AG04449 (cell line): ENCODE measurements at regions of chr22 and their contacts with region 1.

Region 1: DNA sequence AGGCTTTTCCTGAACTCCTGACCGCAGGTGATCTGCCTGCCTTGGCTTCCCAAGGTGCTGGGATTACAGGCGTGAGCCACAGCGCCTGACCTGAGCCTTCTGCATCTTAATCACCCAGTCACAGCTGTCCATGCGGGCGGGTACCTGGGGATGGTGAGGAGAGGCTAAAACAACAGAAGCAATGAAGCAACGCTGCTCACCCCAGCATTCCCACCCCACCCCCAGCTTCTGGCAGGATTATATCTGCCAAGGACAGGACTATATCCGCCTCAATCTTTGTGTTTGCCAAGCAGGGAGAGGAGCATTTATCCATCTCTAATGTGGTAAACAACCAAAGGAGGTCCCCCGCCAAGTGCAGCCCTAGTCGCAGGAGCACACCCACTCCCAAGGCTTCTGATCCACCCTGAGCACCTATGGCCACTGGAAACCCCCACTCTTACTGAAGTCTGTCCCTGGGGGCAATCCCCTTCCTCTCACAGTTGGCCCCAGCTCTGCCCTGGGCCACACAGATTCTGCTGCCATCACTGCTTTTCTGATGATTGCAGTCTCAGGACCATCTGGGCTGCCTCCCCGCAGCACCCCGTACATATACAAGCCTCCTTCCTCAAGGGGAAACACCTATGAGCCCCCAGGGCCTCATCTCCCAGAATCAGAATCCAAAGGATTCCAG is 8.8 kb upstream of the LGALS2 start:
- DNase-seq: no peak
- H3K4me3 ChIP-seq: no peak overlapping the region
- CTCF ChIP-seq: no peak

Region 2: GRCh38 chr22:37362621-37363020 is 226.1 kb before region 1 on chr22:
- CTCF ChIA-PET with region 1: no interaction called
- POLR2A ChIA-PET with region 1: no interaction called
- DNase-seq: no peak
- H3K4me3 ChIP-seq: no peak overlapping the region
- CTCF ChIP-seq: no peak

Region 3: DNA sequence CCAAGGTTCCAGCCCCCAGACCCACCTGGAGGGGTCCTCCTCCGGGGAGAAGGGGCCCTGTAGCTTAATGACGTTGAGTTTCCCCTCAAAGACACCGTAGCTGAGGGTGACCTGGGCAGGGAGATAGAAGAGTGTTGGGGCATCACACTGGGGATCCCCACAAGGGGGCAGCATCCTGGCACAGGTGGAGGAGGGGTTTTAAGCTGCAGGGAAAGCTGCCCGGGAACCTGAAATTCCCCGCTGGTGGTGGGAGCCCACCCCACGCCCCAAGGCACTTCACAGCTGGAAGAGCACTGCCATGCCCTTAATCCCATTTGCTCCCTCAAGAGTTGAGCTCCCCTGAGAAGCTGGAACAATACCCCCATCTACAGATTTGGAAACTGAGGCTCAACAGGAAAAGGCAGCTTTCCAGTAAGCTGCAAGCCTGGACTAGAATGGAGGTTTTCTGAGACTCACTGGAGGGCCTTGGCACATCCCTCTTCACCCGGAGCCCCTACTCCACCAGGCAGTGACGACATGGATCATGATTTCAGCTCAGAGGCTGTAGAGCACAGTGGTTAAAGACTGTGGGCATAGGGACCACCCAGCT is 116.2 kb before region 1 on chr22:
- CTCF ChIA-PET with region 1: interaction called, 19 read pairs
- POLR2A ChIA-PET with region 1: no interaction called
- DNase-seq: no peak
- H3K4me3 ChIP-seq: no peak overlapping the region
- CTCF ChIP-seq: peak; percentile 61

Region 4: GRCh38 chr22:37486224-37486845 is 102.3 kb before region 1 on chr22 and contains the start of gene MFNG:
- CTCF ChIA-PET with region 1: no interaction called
- POLR2A ChIA-PET with region 1: no interaction called
- DNase-seq: no peak
- H3K4me3 ChIP-seq: no peak within 1 kb of the TSS
- CTCF ChIP-seq: no peak

Region 5: DNA sequence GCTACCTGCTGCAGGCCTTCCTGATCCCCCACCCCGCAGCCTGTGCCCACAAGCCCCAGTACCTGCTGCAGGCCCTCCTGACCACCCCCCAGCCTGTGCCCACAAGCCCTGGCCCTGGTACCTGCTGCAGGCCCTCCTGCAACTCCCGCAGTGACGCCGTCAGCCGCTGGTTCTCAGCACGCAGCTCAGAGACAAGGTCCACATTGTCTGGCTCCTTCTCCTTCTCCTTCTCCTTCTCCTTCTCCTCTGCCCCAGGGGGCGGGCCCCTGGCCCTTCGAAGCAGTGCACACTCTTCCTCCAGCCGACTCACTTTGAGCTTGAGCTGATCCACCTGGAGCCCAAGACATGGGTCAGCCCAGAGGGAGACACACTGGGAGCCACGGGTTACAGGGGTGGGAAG is 78.6 kb before region 1 on chr22:
- CTCF ChIA-PET with region 1: interaction called, 11 read pairs
- POLR2A ChIA-PET with region 1: no interaction called
- DNase-seq: no peak
- H3K4me3 ChIP-seq: no peak overlapping the region
- CTCF ChIP-seq: no peak

Region 6: DNA sequence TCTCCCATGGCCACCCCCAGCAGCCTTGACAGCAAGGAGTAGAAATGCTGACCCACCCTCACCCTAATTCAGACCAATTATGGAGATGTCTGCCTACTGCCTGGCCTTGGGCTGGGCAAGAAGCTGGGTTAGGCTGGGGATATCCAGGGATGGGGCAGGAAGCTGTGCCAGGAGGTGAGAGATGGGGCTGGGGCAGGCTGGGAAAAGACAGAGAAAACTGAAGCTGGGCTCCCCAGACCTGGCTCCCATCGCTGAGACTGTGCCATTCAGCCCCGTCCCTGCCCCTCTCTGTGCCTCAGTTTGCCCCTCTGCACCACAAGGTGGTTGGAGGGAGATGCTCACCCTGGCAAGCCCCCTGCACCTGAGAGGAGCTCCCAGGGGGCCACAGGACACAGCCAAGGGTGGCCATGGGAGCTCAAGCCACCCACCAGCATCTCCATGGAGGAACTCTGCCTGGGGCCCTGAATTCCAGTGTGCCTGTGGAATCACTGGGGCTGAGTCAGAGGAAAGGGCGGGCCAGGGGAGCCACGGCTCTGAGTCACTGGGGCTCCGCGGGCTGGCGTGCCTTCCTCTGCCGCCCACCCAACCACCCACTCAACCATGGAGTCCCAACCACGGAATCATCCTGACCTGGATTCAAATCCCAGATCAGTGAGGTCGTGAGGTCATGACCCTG is 63.5 kb before region 1 on chr22:
- CTCF ChIA-PET with region 1: interaction called, 12 read pairs
- POLR2A ChIA-PET with region 1: no interaction called
- DNase-seq: peak; percentile 37
- H3K4me3 ChIP-seq: no peak overlapping the region; the same call in 1 of the 2 replicates
- CTCF ChIP-seq: no peak

Region 7: DNA sequence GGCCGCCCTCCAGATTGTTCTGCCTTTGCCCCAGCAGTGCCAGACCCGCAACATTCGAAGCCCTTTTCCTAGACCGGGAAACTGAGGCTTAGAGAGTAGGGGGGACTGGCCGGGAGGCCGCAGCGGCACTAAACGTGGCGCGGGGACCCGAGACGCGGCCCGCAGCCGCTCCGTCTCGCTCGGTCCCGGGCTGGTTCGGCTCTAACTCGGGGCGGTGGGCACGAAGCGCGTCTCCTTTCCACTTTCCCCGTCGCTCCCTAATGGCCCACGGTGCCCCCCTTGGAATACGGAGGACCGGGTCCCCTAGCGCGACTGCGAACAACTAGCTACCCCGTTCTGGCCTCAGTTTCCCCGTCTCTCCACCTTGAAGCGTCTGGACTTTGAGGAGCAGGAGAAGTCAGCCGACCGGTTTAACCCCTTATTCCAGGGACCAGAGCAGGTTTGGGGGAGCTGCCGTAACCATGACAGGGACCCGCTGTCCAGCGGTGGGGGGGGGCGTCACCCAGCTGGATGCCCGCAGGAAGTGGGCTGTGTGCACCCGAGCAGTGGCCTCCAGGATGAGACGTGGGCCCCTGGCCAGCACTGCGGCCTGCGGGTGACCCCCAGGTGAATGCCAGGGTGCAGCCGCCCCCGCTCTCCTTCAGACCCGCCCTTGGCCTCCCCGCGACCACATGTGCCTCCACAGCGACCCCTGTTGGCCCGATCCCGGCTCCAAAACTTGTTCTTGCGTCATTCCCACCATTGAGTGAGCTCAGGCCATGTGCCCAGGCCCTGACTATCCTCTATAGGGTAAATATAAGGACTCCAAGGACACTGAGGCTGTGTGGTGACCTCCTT is 27.3 kb before region 1 on chr22:
- CTCF ChIA-PET with region 1: interaction called, 171 read pairs
- POLR2A ChIA-PET with region 1: interaction called, 5 read pairs
- DNase-seq: no peak
- H3K4me3 ChIP-seq: peak overlapping the region; percentile 82
- CTCF ChIP-seq: peak; percentile 90

Region 8: DNA sequence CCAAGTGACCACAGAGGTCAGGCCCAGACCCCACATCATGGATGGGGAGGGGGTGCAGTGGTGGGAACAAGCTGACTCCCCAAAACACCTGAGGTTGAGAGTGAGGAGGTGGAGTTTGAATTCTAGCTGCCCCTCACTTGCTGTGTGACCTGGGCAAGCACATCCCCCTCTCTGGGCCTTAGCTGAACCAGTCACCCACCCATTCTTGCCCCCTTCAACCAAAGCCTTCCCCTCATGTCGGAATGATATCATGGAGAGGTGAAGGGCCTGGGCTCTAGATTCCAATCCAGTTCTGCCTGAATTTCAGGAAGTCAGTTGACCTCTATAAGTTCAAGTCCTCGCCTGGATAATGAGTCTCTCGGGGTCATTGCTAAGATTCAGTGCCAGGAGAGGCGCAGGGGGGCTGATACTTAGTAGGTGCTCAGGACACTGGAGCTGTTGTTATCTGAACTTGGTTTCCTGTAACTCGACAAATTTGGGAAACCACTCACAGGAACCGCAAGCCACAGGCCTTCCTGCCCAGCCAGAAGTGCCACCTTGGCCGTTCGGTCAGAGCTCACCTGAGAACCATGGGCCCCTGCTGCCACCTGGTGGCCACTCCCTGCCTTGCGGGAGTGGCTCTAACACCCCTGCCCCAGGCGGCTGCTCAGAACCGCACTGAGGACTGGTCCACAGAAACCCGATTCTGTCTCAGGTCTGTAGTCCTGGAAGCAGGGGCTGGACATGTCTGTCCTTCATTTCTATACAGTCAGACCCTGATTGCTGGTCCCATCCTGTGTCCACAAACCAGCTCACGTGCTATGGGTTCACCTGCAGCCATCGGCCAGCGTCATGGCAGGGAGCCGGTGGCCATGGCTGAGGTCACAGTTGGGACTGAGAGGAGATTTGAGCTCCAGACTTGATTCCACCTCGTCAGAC is 21.5 kb before region 1 on chr22:
- CTCF ChIA-PET with region 1: interaction called, 171 read pairs
- POLR2A ChIA-PET with region 1: interaction called, 5 read pairs
- DNase-seq: no peak
- H3K4me3 ChIP-seq: no peak overlapping the region
- CTCF ChIP-seq: peak; percentile 83

Region 9: GRCh38 chr22:37575490-37576003 is 13.1 kb before region 1 on chr22:
- CTCF ChIA-PET with region 1: interaction called, 171 read pairs
- POLR2A ChIA-PET with region 1: interaction called, 4 read pairs
- DNase-seq: no peak
- H3K4me3 ChIP-seq: no peak overlapping the region
- CTCF ChIP-seq: no peak